ENCODE measurements at regions of chr3 and their contacts with region 1.

Region 1: GRCh38 chr3:45677033-45677433 is 12.2 kb upstream of the SACM1L start:
- DNase-seq: peak in 2 of 3 donors; percentile 58 to 74
- H3K4me3 ChIP-seq: peak overlapping the region in 3 of 7 experiments; percentile 0 to 58 (median 20)
- H3K27ac ChIP-seq: peak overlapping the region in 1 of 2 experiments; percentile 25
- H3K4me1 ChIP-seq: peaks cover 8 to 42% (median 27%) of the 10 kb centered on the region in 4 experiments
- H3K27me3 ChIP-seq: no peaks in the 10 kb centered on the region

Region 2: GRCh38 chr3:45311953-45312801 is 364.9 kb before region 1 on chr3:
- CTCF ChIA-PET with region 1: no interaction called
- POLR2A ChIA-PET with region 1: no interaction called
- DNase-seq: no peak
- H3K4me3 ChIP-seq: no peak overlapping the region
- H3K27ac ChIP-seq: no peak overlapping the region
- H3K4me1 ChIP-seq: no peaks in the 10 kb centered on the region
- H3K27me3 ChIP-seq: peaks cover 0 to 9% (median 6%) of the 10 kb centered on the region in 5 experiments

Region 3: DNA sequence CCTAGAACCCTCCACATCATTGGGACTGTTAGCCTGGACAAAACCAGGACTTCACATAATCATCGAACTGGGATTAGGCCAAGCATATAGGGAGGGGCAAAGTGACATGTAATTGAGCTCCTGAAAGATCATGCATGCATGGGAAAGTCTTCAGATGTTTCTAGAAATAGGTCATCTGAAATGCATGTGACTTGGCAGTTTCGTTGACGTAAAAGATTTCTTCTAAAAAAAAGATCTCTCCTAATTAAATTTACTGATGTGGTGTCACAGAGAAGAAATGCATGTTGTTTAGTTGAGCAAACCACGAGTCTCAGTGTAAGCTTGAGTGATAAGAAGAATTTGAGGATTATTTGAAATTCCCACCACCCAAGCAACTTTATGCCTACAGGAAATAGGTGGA is 152.5 kb before region 1 on chr3:
- CTCF ChIA-PET with region 1: no interaction called
- POLR2A ChIA-PET with region 1: no interaction called
- DNase-seq: no peak
- H3K4me3 ChIP-seq: no peak overlapping the region
- H3K27ac ChIP-seq: no peak overlapping the region
- H3K4me1 ChIP-seq: no peaks in the 10 kb centered on the region
- H3K27me3 ChIP-seq: no peaks in the 10 kb centered on the region

Region 4: DNA sequence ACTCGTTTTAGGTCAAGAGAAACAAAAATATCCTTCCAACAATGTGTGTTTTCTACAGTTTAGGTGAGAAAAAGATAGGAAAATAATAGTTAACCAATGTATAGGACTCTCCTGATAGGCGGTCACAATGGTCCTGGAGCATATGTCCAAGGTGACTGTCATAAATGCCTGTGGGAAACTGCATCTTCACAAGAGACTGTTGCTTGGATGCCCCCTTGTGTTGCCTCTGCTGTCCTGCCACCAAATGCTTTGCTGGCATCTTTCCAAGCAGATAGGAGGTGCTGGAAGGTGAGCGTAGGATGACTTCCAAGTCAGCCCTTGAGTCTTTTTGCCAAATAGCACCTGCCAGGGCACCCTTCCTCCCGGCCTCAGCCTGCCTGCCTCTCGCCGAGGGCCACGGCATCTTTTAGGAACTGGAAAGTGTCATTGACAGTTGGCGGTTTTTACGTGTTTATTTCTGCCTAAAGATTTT is 11.9 kb before region 1 on chr3:
- CTCF ChIA-PET with region 1: interaction called, 42 read pairs
- POLR2A ChIA-PET with region 1: interaction called, 3 read pairs
- DNase-seq: peak; percentile 84 to 86 (median 86)
- H3K4me3 ChIP-seq: peak overlapping the region in 6 of 7 experiments; percentile 60 to 81 (median 71)
- H3K27ac ChIP-seq: peak overlapping the region in 1 of 2 experiments; percentile 78
- H3K4me1 ChIP-seq: peaks cover 7 to 30% (median 21%) of the 10 kb centered on the region in 4 experiments
- H3K27me3 ChIP-seq: no peaks in the 10 kb centered on the region

Region 5: DNA sequence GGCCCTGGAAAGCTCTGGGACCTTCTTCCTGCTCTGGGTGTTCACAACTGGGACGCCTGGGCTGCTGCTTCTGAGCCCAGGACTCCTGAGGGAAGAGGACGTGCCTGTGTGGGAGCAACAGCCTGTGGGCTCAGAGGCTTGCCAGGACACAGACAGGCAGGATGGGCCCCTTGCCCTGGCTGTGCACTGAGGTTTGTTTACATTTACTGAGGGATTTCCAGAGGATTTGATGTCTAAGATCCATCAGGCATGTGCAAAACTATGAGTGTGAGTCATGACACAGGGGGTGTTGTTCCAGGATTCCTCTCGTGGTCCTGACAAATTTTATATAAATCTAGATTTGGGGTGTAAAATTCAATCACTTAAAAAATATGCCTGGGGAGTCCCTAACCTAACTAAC is 219.9 kb after region 1 on chr3:
- CTCF ChIA-PET with region 1: no interaction called
- POLR2A ChIA-PET with region 1: no interaction called
- DNase-seq: no peak
- H3K4me3 ChIP-seq: no peak overlapping the region
- H3K27ac ChIP-seq: no peak overlapping the region
- H3K4me1 ChIP-seq: peaks cover 7 to 26% (median 21%) of the 10 kb centered on the region in 4 experiments
- H3K27me3 ChIP-seq: no peaks in the 10 kb centered on the region